GM12878 (cell line): ENCODE measurements at regions of chr14 and their contacts with region 1.

Region 1: GRCh38 chr14:67704484-67705089 is 2.9 kb downstream of the RDH12 start:
- DNase-seq: peak; percentile 45
- ATAC-seq: peak; percentile 95
- H3K4me3 ChIP-seq: no peak overlapping the region
- H3K27ac ChIP-seq: no peak overlapping the region
- H3K4me1 ChIP-seq: no peaks in the 10 kb centered on the region
- H3K27me3 ChIP-seq: no peaks in the 10 kb centered on the region
- CTCF ChIP-seq: peak; percentile 70 to 89 (median 77)
- EP300 ChIP-seq: no peak
- POLR2A ChIP-seq: no peak
- RAD21 ChIP-seq: peak; percentile 94

Region 2: DNA sequence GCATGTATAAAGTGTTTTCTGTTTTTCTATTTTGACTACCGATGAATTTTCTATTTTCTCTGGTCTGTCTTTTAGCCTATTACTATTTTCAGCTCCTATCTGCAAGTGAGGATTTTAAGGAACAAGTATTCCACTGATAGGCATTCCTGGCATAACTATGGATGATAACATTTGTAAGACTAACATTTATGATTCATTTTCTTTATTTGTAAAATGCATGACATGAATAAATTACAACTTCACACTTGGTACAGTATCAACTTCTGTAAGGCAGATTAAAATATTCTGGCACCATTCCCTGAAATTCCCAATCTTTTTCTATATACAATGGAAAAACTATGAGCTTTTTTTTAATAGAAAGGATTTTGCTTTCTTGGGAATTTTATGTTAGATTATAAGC is 636.3 kb before region 1 on chr14:
- CTCF ChIA-PET with region 1: no interaction called
- POLR2A ChIA-PET with region 1: no interaction called
- RAD21 ChIA-PET with region 1: no interaction called
- SMC1A ChIA-PET with region 1: no interaction called
- in situ Hi-C with region 1: no loop called
- intact Hi-C with region 1: no loop called
- DNase-seq: no peak
- ATAC-seq: no peak
- H3K4me3 ChIP-seq: no peak overlapping the region
- H3K27ac ChIP-seq: no peak overlapping the region
- H3K4me1 ChIP-seq: no peaks in the 10 kb centered on the region
- H3K27me3 ChIP-seq: no peaks in the 10 kb centered on the region
- CTCF ChIP-seq: no peak
- EP300 ChIP-seq: no peak
- POLR2A ChIP-seq: no peak
- RAD21 ChIP-seq: no peak

Region 3: GRCh38 chr14:67435615-67436346 is 268.8 kb before region 1 on chr14:
- CTCF ChIA-PET with region 1: interaction called, 16 read pairs
- POLR2A ChIA-PET with region 1: no interaction called
- RAD21 ChIA-PET with region 1: interaction called, 3 read pairs
- SMC1A ChIA-PET with region 1: interaction called, 7 read pairs
- in situ Hi-C with region 1: no loop called
- intact Hi-C with region 1: no loop called
- DNase-seq: no peak
- ATAC-seq: no peak
- H3K4me3 ChIP-seq: no peak overlapping the region
- H3K27ac ChIP-seq: no peak overlapping the region
- H3K4me1 ChIP-seq: no peaks in the 10 kb centered on the region
- H3K27me3 ChIP-seq: peaks cover 0 to 2% of the 10 kb centered on the region in 2 experiments; a peak in 3 of 4 replicates
- CTCF ChIP-seq: no peak
- EP300 ChIP-seq: no peak
- POLR2A ChIP-seq: no peak
- RAD21 ChIP-seq: no peak

Region 4: DNA sequence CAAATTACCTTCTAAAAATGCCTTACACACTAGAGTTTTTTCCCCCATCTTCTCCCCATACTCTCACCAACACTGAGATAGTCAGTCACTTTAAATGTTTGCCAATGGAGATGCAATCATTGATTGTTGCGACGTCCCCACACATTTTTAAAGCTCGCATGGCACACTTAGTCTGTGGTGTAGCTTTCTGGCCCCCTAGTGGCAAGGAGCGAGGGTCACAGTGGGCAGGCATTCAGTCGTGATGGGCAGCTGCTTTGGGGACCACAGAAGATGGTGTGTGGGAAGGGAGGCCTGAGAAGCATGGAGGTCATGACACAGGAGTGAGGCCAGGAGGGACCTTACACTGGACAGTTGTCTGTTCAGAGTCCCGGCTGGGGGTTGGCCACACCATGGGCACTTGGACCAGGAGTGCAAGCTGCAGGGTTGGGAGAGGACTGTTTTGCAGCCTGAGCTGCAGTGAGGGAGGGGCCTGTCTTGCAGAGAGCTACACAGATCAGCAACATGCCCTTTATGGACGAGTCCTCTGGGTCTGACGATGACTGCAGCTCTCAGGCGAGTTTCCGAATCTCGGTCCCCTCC is 133.2 kb before region 1 on chr14:
- CTCF ChIA-PET with region 1: interaction called, 359 read pairs
- POLR2A ChIA-PET with region 1: interaction called, 3 read pairs
- RAD21 ChIA-PET with region 1: interaction called, 31 read pairs
- SMC1A ChIA-PET with region 1: interaction called, 22 read pairs
- in situ Hi-C with region 1: no loop called
- intact Hi-C with region 1: no loop called
- DNase-seq: no peak
- ATAC-seq: peak; percentile 98
- H3K4me3 ChIP-seq: no peak overlapping the region
- H3K27ac ChIP-seq: no peak overlapping the region
- H3K4me1 ChIP-seq: no peaks in the 10 kb centered on the region
- H3K27me3 ChIP-seq: no peaks in the 10 kb centered on the region
- CTCF ChIP-seq: peak; percentile 91 to 96 (median 96); a peak in 5 of 6 replicates
- EP300 ChIP-seq: no peak
- POLR2A ChIP-seq: no peak
- RAD21 ChIP-seq: peak; percentile 92

Region 5: GRCh38 chr14:67610491-67610890 is 94.1 kb before region 1 on chr14:
- CTCF ChIA-PET with region 1: interaction called, 30 read pairs
- POLR2A ChIA-PET with region 1: no interaction called
- RAD21 ChIA-PET with region 1: interaction called, 18 read pairs
- SMC1A ChIA-PET with region 1: interaction called, 32 read pairs
- in situ Hi-C with region 1: no loop called
- intact Hi-C with region 1: no loop called
- DNase-seq: no peak
- ATAC-seq: no peak
- H3K4me3 ChIP-seq: no peak overlapping the region
- H3K27ac ChIP-seq: no peak overlapping the region
- H3K4me1 ChIP-seq: no peaks in the 10 kb centered on the region
- H3K27me3 ChIP-seq: no peaks in the 10 kb centered on the region
- CTCF ChIP-seq: no peak
- EP300 ChIP-seq: no peak
- POLR2A ChIP-seq: no peak
- RAD21 ChIP-seq: no peak

Region 6: GRCh38 chr14:67644428-67644827 is 60.2 kb before region 1 on chr14:
- CTCF ChIA-PET with region 1: interaction called, 11 read pairs
- POLR2A ChIA-PET with region 1: no interaction called
- RAD21 ChIA-PET with region 1: interaction called, 3 read pairs
- SMC1A ChIA-PET with region 1: interaction called, 11 read pairs
- in situ Hi-C with region 1: no loop called
- intact Hi-C with region 1: no loop called
- DNase-seq: no peak
- ATAC-seq: no peak
- H3K4me3 ChIP-seq: no peak overlapping the region
- H3K27ac ChIP-seq: no peak overlapping the region
- H3K4me1 ChIP-seq: no peaks in the 10 kb centered on the region
- H3K27me3 ChIP-seq: no peaks in the 10 kb centered on the region
- CTCF ChIP-seq: no peak
- EP300 ChIP-seq: no peak
- POLR2A ChIP-seq: no peak
- RAD21 ChIP-seq: no peak

Region 7: DNA sequence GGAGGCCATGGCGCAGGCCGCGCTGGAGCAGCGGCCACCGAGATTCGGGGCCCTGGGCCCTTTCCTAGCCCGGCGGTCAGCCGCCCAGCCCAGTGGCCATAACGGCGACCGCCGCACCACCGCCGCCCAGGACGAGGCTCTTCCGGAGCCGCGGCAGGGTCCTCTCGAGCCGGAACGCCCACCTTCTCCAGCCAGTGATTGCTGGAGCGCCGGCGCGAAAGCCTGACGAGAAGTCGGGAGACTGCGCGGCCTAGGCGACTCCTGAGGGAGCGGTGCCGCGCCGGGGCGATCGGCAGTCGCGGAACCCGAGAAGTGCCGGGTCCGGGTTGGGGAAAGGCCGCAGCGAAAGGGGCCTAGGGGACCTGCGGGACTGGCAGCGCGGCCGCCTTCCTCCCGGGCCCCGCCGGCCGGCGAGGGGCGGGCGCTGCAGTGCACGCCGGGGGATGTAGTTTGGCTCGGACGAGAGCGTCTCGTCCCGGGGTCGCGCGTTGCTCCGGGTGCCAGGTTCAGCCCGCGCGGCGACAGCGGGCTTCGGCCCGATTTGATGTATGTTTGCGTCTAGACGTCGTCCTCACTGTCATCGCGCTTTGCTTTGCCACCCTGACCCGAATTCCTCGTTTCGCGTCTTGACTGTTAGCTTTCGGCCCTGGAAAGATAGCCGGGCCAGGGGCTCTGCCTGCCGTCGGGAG is 30.0 kb before region 1 on chr14 and contains the start of gene VTI1B:
- CTCF ChIA-PET with region 1: interaction called, 223 read pairs
- POLR2A ChIA-PET with region 1: interaction called, 6 read pairs
- RAD21 ChIA-PET with region 1: interaction called, 144 read pairs
- SMC1A ChIA-PET with region 1: interaction called, 131 read pairs
- in situ Hi-C with region 1: no loop called
- intact Hi-C with region 1: no loop called
- DNase-seq: no peak
- ATAC-seq: peak; percentile 97
- H3K4me3 ChIP-seq: peak within 1 kb of the TSS; percentile 85
- H3K27ac ChIP-seq: peak within 1 kb of the TSS; percentile 97
- H3K4me1 ChIP-seq: peaks cover 9% of the 10 kb centered on the region
- H3K27me3 ChIP-seq: no peaks in the 10 kb centered on the region
- CTCF ChIP-seq: 0 out of 6 replicates have a peak, but pooled peaks of 1 of the 3 experiments have one; percentile 0
- EP300 ChIP-seq: no peak
- POLR2A ChIP-seq: peak; percentile 94
- RAD21 ChIP-seq: no peak
- polyA plus RNA-seq, gene VTI1B: 15.0 to 43.8 TPM

Region 8: GRCh38 chr14:67798731-67799130 is 94.1 kb after region 1 on chr14:
- CTCF ChIA-PET with region 1: no interaction called
- POLR2A ChIA-PET with region 1: no interaction called
- RAD21 ChIA-PET with region 1: no interaction called
- SMC1A ChIA-PET with region 1: no interaction called
- in situ Hi-C with region 1: no loop called
- intact Hi-C with region 1: no loop called
- DNase-seq: no peak
- ATAC-seq: no peak
- H3K4me3 ChIP-seq: no peak overlapping the region
- H3K27ac ChIP-seq: no peak overlapping the region
- H3K4me1 ChIP-seq: no peaks in the 10 kb centered on the region
- H3K27me3 ChIP-seq: no peaks in the 10 kb centered on the region
- CTCF ChIP-seq: no peak
- EP300 ChIP-seq: no peak
- POLR2A ChIP-seq: no peak
- RAD21 ChIP-seq: no peak